ENCODE measurements at regions of chr1 and their contacts with region 1.

Region 1: GRCh38 chr1:38834937-38835827 is 24.4 kb downstream of the RRAGC start:
- DNase-seq: no peak
- ATAC-seq: peak; percentile 96
- H3K4me3 ChIP-seq: no peak overlapping the region
- H3K27ac ChIP-seq: no peak overlapping the region
- H3K4me1 ChIP-seq: peaks cover 2% of the 10 kb centered on the region
- H3K27me3 ChIP-seq: no peaks in the 10 kb centered on the region
- CTCF ChIP-seq: peak; percentile 83

Region 2: GRCh38 chr1:38026592-38027200 is 808.5 kb before region 1 on chr1:
- intact Hi-C with region 1: loop called (anchors 10 kb)
- DNase-seq: peak; percentile 88
- ATAC-seq: peak; percentile 89
- H3K4me3 ChIP-seq: no peak overlapping the region
- H3K27ac ChIP-seq: no peak overlapping the region
- H3K4me1 ChIP-seq: peaks cover 22% of the 10 kb centered on the region
- H3K27me3 ChIP-seq: no peaks in the 10 kb centered on the region
- CTCF ChIP-seq: peak; percentile 73

Region 3: GRCh38 chr1:38919130-38919529 is 83.9 kb after region 1 on chr1:
- intact Hi-C with region 1: no loop called
- DNase-seq: no peak
- ATAC-seq: peak; percentile 53
- H3K4me3 ChIP-seq: no peak overlapping the region
- H3K27ac ChIP-seq: no peak overlapping the region
- H3K4me1 ChIP-seq: no peaks in the 10 kb centered on the region
- H3K27me3 ChIP-seq: no peaks in the 10 kb centered on the region
- CTCF ChIP-seq: no peak

Measured in upper lobe of right lung (tissue), 1 donor.